ENCODE measurements at regions of chr16 and their contacts with region 1.

Region 1: DNA sequence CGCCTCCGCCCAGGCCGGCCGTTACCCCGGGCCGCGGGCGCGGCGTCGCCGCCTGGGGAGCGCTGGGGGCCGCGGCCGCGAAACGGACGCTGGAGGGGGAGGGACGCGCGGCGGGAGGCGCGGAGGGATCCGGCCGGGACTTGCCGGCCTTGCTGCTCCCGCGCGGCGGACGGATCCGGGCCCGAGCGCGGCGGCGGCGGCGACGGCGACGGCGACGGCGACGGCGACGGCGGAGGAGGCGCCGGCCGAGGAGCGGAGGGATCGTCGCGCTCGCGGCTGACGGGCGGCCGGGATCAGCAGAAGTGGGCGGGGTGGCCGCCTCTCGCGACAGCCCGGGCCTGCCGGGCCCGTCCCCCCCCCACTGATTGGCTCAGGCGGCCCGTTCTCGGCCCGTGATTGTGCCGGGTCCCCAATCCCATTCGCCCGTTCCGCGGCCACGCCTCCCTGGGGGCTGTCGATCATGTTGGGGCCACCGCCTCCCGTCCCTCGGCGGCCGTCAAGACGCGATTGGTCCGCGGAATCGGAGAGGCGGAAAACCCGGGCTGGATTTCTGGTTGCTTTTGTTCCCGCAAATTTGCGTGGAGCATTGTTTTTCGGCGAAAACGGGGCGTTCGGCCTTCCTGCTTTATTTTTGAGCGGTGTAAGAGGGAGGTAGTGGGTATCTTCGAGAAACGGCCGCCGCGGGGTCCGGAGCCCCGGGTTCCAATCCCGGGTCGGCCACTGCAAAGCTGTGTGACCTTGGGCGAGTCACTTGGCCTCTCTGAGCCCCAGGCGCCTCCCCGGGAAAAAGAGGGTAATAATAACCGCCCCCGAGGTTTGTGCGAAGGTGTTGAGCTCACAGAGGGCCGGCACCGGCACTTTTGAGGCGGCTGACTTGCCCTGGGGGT is at the start of gene ZCCHC14:
- DNase-seq: peak; percentile 98
- ATAC-seq: peak; percentile 98
- H3K4me3 ChIP-seq: peak within 1 kb of the TSS; percentile 67
- H3K27ac ChIP-seq: peak within 1 kb of the TSS; percentile 7; the same call in 1 of the 2 replicates
- H3K4me1 ChIP-seq: peaks cover 12% of the 10 kb centered on the region
- H3K27me3 ChIP-seq: no peaks in the 10 kb centered on the region
- CTCF ChIP-seq: no peak
- POLR2A ChIP-seq: peak; percentile 54; the same call in 1 of the 2 replicates
- RAD21 ChIP-seq: no peak
- total RNA-seq, gene ZCCHC14: 2.5 and 2.8 TPM in 2 replicates

Region 2: DNA sequence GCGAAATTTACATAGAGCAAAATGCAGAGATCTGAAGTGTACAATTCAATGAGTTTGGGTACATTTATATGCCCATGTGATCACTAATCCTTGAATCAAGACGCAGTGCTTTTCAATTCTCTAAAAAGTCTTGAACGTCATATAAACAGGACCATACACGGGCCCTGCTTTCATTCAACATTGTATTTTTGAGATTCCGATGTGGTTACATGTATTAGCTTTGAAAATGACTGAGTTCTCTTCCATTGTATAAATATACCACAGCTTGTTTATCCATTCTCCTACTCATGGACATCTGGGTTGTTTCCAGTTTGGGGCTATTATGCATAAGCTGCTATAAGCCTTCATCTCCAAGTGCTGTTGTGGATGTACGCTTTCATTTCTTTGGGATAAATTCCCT is 45.6 kb before region 1 on chr16:
- CTCF ChIA-PET with region 1: interaction called, 3 read pairs
- POLR2A ChIA-PET with region 1: no interaction called
- dilution Hi-C with region 1: no loop called
- in situ Hi-C with region 1: no loop called
- intact Hi-C with region 1: loop called (anchors 5 kb)
- DNase-seq: peak; percentile 97
- ATAC-seq: peak; percentile 96
- H3K4me3 ChIP-seq: no peak overlapping the region
- H3K27ac ChIP-seq: peak overlapping the region; percentile 94
- H3K4me1 ChIP-seq: peaks cover 20% of the 10 kb centered on the region
- H3K27me3 ChIP-seq: no peaks in the 10 kb centered on the region
- CTCF ChIP-seq: no peak
- POLR2A ChIP-seq: no peak
- RAD21 ChIP-seq: peak; percentile 11; the same call in 1 of the 2 replicates

Region 3: DNA sequence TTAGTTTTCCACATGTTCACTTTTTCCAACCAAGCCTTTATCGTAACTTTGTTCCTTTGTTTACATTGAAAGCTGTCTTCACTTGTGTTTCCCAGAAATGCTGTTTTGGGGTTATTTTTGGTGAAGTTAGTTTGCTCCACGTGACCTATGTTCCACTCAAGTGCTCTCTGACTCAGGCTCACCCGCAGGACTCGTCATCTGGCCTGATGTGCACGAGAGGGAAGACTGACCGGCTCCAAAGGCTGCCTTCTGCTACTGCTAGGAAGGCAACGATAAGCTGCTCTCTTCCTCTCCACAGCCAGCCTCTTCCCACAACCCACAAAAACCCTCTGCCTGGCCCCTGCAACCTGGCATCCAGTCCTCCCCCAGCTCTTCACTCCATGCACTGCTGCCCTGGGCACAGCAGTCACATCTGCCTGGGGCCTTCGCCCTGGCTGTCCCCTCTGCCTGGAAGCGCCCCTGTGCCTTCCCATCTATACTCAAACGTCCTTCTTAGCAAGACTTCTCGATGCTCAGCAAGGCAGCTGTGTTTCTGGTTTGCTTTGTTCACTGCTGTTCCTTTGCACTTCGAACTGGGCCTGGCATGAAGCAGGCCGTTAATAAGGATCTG is 28.2 kb before region 1 on chr16:
- CTCF ChIA-PET with region 1: no interaction called
- POLR2A ChIA-PET with region 1: no interaction called
- dilution Hi-C with region 1: no loop called
- in situ Hi-C with region 1: no loop called
- intact Hi-C with region 1: loop called (anchors 1 kb)
- DNase-seq: peak; percentile 96
- ATAC-seq: peak; percentile 94
- H3K4me3 ChIP-seq: no peak overlapping the region
- H3K27ac ChIP-seq: peak overlapping the region; percentile 90
- H3K4me1 ChIP-seq: peaks cover 23% of the 10 kb centered on the region
- H3K27me3 ChIP-seq: no peaks in the 10 kb centered on the region
- CTCF ChIP-seq: no peak
- POLR2A ChIP-seq: peak; percentile 73
- RAD21 ChIP-seq: no peak; the same call in 1 of the 2 replicates

Region 4: DNA sequence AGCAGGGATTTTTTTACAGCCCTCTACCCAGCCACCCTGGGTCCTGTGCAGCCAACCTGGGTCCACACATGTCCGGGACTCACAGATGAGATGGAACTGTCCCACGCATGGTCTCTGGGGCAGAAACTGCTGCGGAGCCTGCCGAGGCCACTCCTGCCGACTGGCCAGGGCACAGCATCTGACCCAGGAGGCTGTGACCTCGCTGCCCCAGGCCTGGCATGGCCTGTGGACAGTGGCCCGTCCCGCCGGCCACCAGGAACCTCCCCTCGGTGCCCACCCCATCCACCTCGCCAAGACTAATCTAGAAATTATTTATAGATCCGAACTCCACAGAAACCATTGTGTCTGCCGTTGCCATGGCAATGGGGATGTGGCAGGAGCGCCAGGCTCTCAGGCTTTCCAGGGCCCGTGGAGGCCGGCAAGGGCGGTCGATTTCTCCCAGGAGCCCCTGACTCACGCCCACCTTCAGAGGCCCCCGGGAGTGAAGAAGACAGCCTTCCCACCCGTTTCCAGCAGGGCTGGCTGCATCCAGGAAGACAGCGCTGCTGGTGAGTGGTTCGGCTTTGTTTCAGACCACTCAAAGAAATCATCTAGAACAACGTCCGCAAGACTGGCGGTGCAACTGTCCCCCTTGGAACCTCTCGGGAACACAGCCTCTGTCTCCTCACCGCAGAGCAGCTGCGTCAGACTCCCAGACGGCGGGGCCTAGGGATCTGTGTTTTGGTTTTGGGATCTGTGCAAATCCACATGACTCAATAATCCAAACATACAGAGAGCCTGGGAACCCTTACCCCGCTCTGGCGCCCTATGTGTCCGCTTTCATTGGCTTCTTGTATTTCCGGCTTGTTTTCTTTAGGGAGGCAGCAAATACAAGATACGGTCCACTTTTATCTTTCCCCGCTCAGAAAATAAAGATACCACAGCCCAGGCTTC is 48.2 kb after region 1 on chr16:
- CTCF ChIA-PET with region 1: no interaction called
- POLR2A ChIA-PET with region 1: no interaction called
- dilution Hi-C with region 1: no loop called
- in situ Hi-C with region 1: no loop called
- intact Hi-C with region 1: loop called (anchors 2 kb)
- DNase-seq: peak; percentile 79
- ATAC-seq: peak; percentile 96
- H3K4me3 ChIP-seq: no peak overlapping the region; the same call in 1 of the 2 replicates
- H3K27ac ChIP-seq: no peak overlapping the region
- H3K4me1 ChIP-seq: peaks cover 11% of the 10 kb centered on the region
- H3K27me3 ChIP-seq: peaks cover 23% of the 10 kb centered on the region
- CTCF ChIP-seq: no peak
- POLR2A ChIP-seq: no peak
- RAD21 ChIP-seq: no peak

Region 5: DNA sequence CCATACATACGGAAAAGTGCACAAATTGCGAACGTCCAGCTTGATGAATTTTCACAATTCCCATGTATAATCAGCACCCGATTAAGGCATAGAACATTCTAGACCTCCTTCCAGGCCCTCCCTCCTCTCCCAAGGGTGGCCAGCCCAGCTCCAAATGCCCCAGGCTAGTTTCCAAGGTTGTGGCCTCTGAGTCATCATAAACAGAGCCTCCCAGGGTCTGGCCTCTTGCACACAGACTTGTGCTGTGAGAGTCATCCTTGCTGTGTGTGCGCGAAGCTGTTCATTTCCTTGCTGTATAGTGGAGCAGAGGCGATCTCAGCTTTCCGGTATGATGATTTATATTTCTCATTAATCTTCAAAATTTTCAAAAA is 88.9 kb after region 1 on chr16:
- CTCF ChIA-PET with region 1: no interaction called
- POLR2A ChIA-PET with region 1: no interaction called
- dilution Hi-C with region 1: no loop called
- in situ Hi-C with region 1: no loop called
- intact Hi-C with region 1: loop called (anchors 2 kb)
- DNase-seq: peak; percentile 98
- ATAC-seq: peak; percentile 90
- H3K4me3 ChIP-seq: no peak overlapping the region
- H3K27ac ChIP-seq: peak overlapping the region; percentile 94
- H3K4me1 ChIP-seq: peaks cover 26% of the 10 kb centered on the region
- H3K27me3 ChIP-seq: peaks cover 3% of the 10 kb centered on the region; the same call in 1 of the 2 replicates
- CTCF ChIP-seq: no peak
- POLR2A ChIP-seq: no peak
- RAD21 ChIP-seq: no peak

Measured in IMR-90 (cell line).